Heart right ventricle (tissue), 16 donors: ENCODE measurements at regions of chr4 and their contacts with region 1.

Region 1: GRCh38 chr4:94451695-94452475 is at the start of gene PDLIM5:
- DNase-seq: peak; percentile 92
- ATAC-seq: peak; percentile 91 to 97 (median 94)
- H3K4me3 ChIP-seq: peak within 1 kb of the TSS; percentile 91 to 99 (median 96)
- H3K27ac ChIP-seq: peak within 1 kb of the TSS; percentile 97 to 100 (median 99)
- H3K4me1 ChIP-seq: peaks cover 0 to 47% (median 24%) of the 10 kb centered on the region in 9 donors
- H3K27me3 ChIP-seq: no peaks in the 10 kb centered on the region
- CTCF ChIP-seq: peak in 2 of 9 donors; percentile 5 to 20
- total RNA-seq, gene PDLIM5: 856 to 1,549 (median 1,274) TPM

Region 2: GRCh38 chr4:94406668-94407437 is 45.0 kb before region 1 on chr4:
- intact Hi-C with region 1: loop called in 9 of 10 experiments (anchors 1 to 10 kb)
- DNase-seq: peak; percentile 21 to 83
- ATAC-seq: peak; percentile 36 to 68 (median 57)
- H3K4me3 ChIP-seq: no peak overlapping the region
- H3K27ac ChIP-seq: peak overlapping the region; percentile 61 to 92 (median 85)
- H3K4me1 ChIP-seq: peaks cover 4 to 55% (median 22%) of the 10 kb centered on the region in 9 donors
- H3K27me3 ChIP-seq: no peaks in the 10 kb centered on the region
- CTCF ChIP-seq: peak; percentile 77 to 97 (median 93)

Region 3: GRCh38 chr4:94507708-94508107 is 55.8 kb after region 1 on chr4:
- intact Hi-C with region 1: loop called in 1 of 10 experiments (anchors 10 kb)
- DNase-seq: no peak
- ATAC-seq: peak; percentile 62 to 89 (median 72)
- H3K4me3 ChIP-seq: no peak overlapping the region
- H3K27ac ChIP-seq: peak overlapping the region in 9 of 10 donors; percentile 23 to 65 (median 52)
- H3K4me1 ChIP-seq: peaks cover 8 to 94% (median 68%) of the 10 kb centered on the region in 9 donors
- H3K27me3 ChIP-seq: no peaks in the 10 kb centered on the region
- CTCF ChIP-seq: no peak

Region 4: DNA sequence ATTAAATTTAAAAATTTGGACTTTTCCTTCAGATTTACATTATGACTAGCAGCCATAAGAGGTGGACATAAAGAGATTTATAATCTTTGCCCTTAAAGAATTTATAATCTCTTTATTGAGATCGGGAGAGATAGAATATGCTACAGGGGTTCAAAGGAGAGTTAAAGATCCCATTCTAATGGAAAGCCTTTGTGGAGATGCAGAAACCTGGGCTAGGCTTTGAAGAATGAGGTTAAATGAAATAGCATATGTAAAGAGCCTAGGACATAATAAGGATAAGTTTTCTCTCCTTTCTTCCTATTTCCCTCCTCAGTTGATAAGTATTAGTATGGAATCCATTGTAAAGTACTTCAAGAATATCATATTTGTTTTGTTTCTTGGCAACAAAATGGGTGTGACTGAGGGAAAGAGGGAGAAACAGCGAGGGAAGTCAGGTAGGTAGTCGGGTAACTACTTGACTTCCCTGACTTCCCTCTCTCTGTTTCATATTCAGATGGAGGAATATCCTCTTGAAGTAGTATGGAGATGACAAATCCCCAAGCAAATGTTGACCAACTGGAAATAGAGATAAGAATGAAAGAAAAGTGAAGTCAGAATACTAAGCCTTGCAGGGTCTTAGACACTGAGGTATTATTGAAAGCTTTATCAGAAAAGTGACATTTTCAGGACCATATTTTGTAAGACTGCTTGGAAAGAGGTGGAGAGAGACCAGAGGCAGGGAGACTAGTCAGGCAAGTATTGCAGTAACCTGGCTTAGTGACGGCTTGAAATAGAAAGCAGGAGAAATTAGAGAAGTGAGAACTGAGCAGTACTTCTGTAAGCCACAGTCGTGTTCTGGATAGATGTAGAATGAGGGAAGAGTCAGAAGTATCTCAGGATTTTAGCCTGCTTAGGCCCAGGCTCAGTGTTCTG is 82.8 kb after region 1 on chr4:
- intact Hi-C with region 1: loop called in 2 of 10 experiments (anchors 10 kb)
- DNase-seq: no peak
- ATAC-seq: peak in 6 of 8 donors; percentile 26 to 45 (median 36)
- H3K4me3 ChIP-seq: no peak overlapping the region
- H3K27ac ChIP-seq: peak overlapping the region in 7 of 10 donors; percentile 34 to 72 (median 56)
- H3K4me1 ChIP-seq: peaks cover 8 to 100% (median 87%) of the 10 kb centered on the region in 9 donors
- H3K27me3 ChIP-seq: no peaks in the 10 kb centered on the region
- CTCF ChIP-seq: no peak

Region 5: DNA sequence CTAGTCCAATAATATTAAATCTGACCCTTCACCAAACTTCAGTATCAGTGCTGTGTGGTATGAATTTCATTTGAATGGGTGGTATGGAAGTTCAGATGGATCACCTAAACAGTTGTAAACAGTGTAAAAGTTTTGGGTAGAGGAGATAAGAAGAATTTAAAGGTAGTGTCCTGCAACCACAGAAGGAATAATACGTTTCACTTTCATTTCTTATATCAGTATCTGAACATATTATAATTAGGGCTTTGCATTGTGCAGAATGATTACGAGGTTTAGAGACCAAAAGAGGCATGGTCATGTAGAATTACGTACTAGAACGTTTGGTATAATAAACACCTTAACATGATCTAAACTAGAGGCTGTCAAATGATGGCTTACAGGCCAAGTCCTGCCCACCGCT is 115.9 kb after region 1 on chr4:
- intact Hi-C with region 1: loop called in 4 of 10 experiments (anchors 5 to 10 kb)
- DNase-seq: no peak
- ATAC-seq: peak in 1 of 8 donors; percentile 4
- H3K4me3 ChIP-seq: peak overlapping the region in 2 of 10 donors; percentile 3 to 4
- H3K27ac ChIP-seq: peak overlapping the region in 4 of 10 donors; percentile 8 to 39 (median 9)
- H3K4me1 ChIP-seq: peaks cover 0 to 92% (median 76%) of the 10 kb centered on the region in 9 donors
- H3K27me3 ChIP-seq: no peaks in the 10 kb centered on the region
- CTCF ChIP-seq: no peak

Region 6: DNA sequence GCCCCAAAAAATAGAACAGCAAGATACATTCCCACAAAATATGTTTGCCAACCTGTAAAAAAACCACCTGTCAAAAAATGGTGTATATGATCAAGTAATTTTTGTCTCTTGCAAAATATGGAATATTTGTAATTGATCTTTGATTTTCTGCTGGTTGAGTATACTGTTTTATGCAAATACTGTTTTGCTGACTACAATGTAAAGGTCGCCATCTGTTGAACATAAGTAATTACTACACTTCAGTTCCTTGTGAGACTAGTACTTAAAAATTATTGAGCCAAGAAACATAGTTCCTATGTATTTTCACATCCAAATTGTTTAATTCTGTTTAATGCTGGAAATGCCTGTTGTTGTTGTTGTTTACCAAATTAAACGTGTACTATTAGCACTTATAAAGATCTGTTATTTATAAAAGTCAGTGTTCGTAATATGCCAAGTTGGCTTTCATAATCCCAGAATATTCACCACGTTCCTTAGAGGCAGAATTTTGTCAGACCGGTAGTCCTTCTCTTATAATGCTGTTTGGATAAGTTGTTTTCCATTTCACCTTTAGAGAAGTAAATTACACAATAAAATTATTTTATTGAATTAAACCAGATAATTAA is 144.1 kb after region 1 on chr4:
- intact Hi-C with region 1: loop called in 4 of 10 experiments (anchors 5 to 10 kb)
- DNase-seq: no peak
- ATAC-seq: peak in 3 of 8 donors; percentile 41 to 57 (median 42)
- H3K4me3 ChIP-seq: no peak overlapping the region
- H3K27ac ChIP-seq: peak overlapping the region in 1 of 10 donors; percentile 30
- H3K4me1 ChIP-seq: peaks cover 0 to 34% (median 19%) of the 10 kb centered on the region in 9 donors
- H3K27me3 ChIP-seq: no peaks in the 10 kb centered on the region
- CTCF ChIP-seq: peak; percentile 40 to 81 (median 64)